ENCODE measurements at regions of chr2 and their contacts with region 1.

Region 1: GRCh38 chr2:56183643-56184499 is at the start of gene CCDC85A:
- DNase-seq: peak; percentile 55
- H3K4me3 ChIP-seq: no peak within 1 kb of the TSS
- H3K27ac ChIP-seq: no peak within 1 kb of the TSS
- H3K4me1 ChIP-seq: no peaks in the 10 kb centered on the region
- CTCF ChIP-seq: peak; percentile 83
- total RNA-seq, gene CCDC85A: not detected in 2 replicates

Region 2: GRCh38 chr2:56195563-56195962 is 11.7 kb after region 1 on chr2:
- CTCF ChIA-PET with region 1: no interaction called
- POLR2A ChIA-PET with region 1: no interaction called
- intact Hi-C with region 1: no loop called
- DNase-seq: no peak
- H3K4me3 ChIP-seq: no peak overlapping the region
- H3K27ac ChIP-seq: no peak overlapping the region
- H3K4me1 ChIP-seq: no peaks in the 10 kb centered on the region
- CTCF ChIP-seq: no peak

Region 3: GRCh38 chr2:56749152-56749752 is 565.4 kb after region 1 on chr2:
- CTCF ChIA-PET with region 1: no interaction called
- POLR2A ChIA-PET with region 1: no interaction called
- intact Hi-C with region 1: loop called (anchors 5 kb)
- DNase-seq: peak; percentile 22
- H3K4me3 ChIP-seq: no peak overlapping the region
- H3K27ac ChIP-seq: no peak overlapping the region
- H3K4me1 ChIP-seq: no peaks in the 10 kb centered on the region
- CTCF ChIP-seq: peak; percentile 75

Region 4: GRCh38 chr2:57516698-57517340 is 1332.9 kb after region 1 on chr2:
- CTCF ChIA-PET with region 1: no interaction called
- POLR2A ChIA-PET with region 1: no interaction called
- intact Hi-C with region 1: loop called (anchors 5 kb)
- DNase-seq: peak; percentile 54
- H3K4me3 ChIP-seq: no peak overlapping the region
- H3K27ac ChIP-seq: no peak overlapping the region
- H3K4me1 ChIP-seq: no peaks in the 10 kb centered on the region
- CTCF ChIP-seq: peak; percentile 86

Measured in OCI-LY7 (cell line).